ENCODE measurements at regions of chr12 and their contacts with region 1.

Region 1: GRCh38 chr12:31238764-31239387 is 87.1 kb downstream of the SINHCAF start:
- DNase-seq: peak; percentile 81
- H3K4me3 Mint-ChIP-seq: peak overlapping the region; percentile 46
- H3K27ac Mint-ChIP-seq: no peak overlapping the region
- H3K4me1 Mint-ChIP-seq: peaks cover 19% of the 10 kb centered on the region
- H3K27me3 Mint-ChIP-seq: peaks cover 49% of the 10 kb centered on the region
- CTCF ChIP-seq: peak; percentile 62

Region 2: GRCh38 chr12:30847259-30847658 is 391.6 kb before region 1 on chr12:
- CTCF ChIA-PET with region 1: interaction called, 141 read pairs
- POLR2A ChIA-PET with region 1: no interaction called
- intact Hi-C with region 1: loop called (anchors 1 kb)
- DNase-seq: peak; percentile 81
- H3K4me3 Mint-ChIP-seq: no peak overlapping the region
- H3K27ac Mint-ChIP-seq: no peak overlapping the region
- H3K4me1 Mint-ChIP-seq: peaks cover 7% of the 10 kb centered on the region
- H3K27me3 Mint-ChIP-seq: no peaks in the 10 kb centered on the region
- CTCF ChIP-seq: peak; percentile 87

Region 3: GRCh38 chr12:31117203-31118011 is 121.5 kb before region 1 on chr12:
- CTCF ChIA-PET with region 1: interaction called, 4 read pairs
- POLR2A ChIA-PET with region 1: no interaction called
- intact Hi-C with region 1: loop called (anchors 5 kb)
- DNase-seq: peak; percentile 49
- H3K4me3 Mint-ChIP-seq: peak overlapping the region; percentile 62
- H3K27ac Mint-ChIP-seq: no peak overlapping the region
- H3K4me1 Mint-ChIP-seq: no peaks in the 10 kb centered on the region
- H3K27me3 Mint-ChIP-seq: no peaks in the 10 kb centered on the region
- CTCF ChIP-seq: peak; percentile 46

Measured in MCF 10A (cell line).